Activated naive CD4-positive, alpha-beta T cell treated with anti-CD3 and anti-CD28 coated beads for 36 hours (primary cell): ENCODE measurements at regions of chr3 and their contacts with region 1.

Region 1: GRCh38 chr3:152193673-152194267 is 75.0 kb upstream of the MBNL1 start:
- DNase-seq: peak; percentile 57
- H3K4me3 Mint-ChIP-seq: peak overlapping the region; percentile 72
- H3K27ac Mint-ChIP-seq: peak overlapping the region; percentile 88
- H3K4me1 Mint-ChIP-seq: peaks cover 82% of the 10 kb centered on the region
- H3K27me3 Mint-ChIP-seq: no peaks in the 10 kb centered on the region

Region 2: DNA sequence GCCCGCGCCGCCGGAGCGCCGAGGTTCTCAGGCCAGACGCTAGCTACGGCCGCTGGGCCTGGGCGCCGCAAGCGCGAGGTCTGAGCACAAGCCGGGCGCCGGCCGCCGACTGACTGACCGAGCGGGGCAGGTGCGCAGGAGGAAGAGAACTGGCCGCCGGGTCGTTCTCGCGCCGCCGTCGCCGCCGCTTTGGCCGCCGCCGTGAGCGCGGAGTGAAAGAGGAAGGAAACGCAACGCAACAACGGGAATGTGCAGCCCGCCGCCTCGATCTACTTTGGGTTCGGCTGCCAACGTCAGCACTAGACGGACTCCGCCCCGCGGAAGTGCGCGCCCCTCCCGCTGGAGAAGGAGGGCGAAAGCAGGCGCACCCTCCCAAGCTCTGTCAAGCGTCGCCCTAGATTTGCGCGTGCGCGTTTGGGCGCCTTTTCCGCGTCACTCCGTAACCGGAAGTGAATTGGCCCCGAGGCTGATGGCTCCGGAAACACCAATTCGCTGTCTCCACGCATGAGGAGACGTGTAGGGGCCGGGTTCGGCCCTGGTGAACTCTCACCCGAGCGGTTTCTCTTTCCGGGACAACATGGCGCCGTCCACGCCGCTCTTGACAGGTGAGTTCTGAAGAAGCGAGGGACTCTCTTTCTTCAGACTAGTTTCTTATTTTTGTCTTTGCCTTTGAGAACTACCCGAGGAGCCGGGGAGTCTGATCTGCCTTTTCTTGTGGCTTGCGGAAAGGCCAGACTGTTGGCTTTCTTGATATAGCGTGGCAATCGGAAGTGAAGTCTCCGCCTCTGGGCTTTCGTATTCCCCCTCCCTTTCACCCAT is 1647.3 kb before region 1 on chr3 and contains the starts of genes EIF2A and SERP1:
- CTCF ChIA-PET with region 1: no interaction called
- intact Hi-C with region 1: loop called (anchors 10 kb)
- DNase-seq: peak; percentile 99
- H3K4me3 Mint-ChIP-seq: peak within 1 kb of the TSS; percentile 97
- H3K27ac Mint-ChIP-seq: peak within 1 kb of the TSS; percentile 95
- H3K4me1 Mint-ChIP-seq: peaks cover 69% of the 10 kb centered on the region
- H3K27me3 Mint-ChIP-seq: no peaks in the 10 kb centered on the region
- total RNA-seq, gene EIF2A: 133 to 135 TPM
- total RNA-seq, gene SERP1: 95.9 to 105 TPM

Region 3: GRCh38 chr3:152127058-152127457 is 66.7 kb before region 1 on chr3:
- CTCF ChIA-PET with region 1: no interaction called
- intact Hi-C with region 1: loop called (anchors 1 kb)
- DNase-seq: peak; percentile 53
- H3K4me3 Mint-ChIP-seq: no peak overlapping the region
- H3K27ac Mint-ChIP-seq: no peak overlapping the region
- H3K4me1 Mint-ChIP-seq: peaks cover 29% of the 10 kb centered on the region
- H3K27me3 Mint-ChIP-seq: no peaks in the 10 kb centered on the region

Region 4: DNA sequence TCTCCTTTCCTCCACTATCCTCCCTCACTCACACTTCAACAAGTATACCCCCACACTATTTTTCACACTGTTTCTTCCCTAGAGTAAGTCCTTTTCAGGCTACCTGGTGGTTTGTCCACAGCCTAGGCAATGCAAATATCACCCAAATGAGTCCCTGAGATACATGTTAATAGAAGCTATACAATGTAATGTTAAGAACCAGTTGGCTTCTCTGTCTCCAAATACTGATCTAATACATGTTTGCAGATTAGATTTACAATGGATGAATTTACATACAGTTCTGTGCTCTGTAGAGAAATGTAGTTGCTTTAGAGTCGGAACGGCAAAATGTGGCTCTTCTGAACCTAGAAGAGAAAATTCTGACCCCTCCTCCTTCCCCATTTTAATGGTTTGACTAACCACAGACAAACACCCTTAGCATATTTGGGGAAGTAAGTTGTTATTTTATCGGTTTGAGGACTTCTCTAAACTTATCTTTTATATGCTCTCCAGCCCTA is 11.4 kb after region 1 on chr3:
- CTCF ChIA-PET with region 1: interaction called, 6 read pairs
- intact Hi-C with region 1: loop called (anchors 1 kb)
- DNase-seq: no peak
- H3K4me3 Mint-ChIP-seq: peak overlapping the region; percentile 89
- H3K27ac Mint-ChIP-seq: peak overlapping the region; percentile 99
- H3K4me1 Mint-ChIP-seq: peaks cover 67% of the 10 kb centered on the region
- H3K27me3 Mint-ChIP-seq: no peaks in the 10 kb centered on the region

Region 5: GRCh38 chr3:152258448-152259393 is 65.0 kb after region 1 on chr3:
- CTCF ChIA-PET with region 1: interaction called, 5 read pairs
- intact Hi-C with region 1: loop called (anchors 1 kb)
- DNase-seq: peak; percentile 81
- H3K4me3 Mint-ChIP-seq: peak overlapping the region; percentile 72
- H3K27ac Mint-ChIP-seq: peak overlapping the region; percentile 94
- H3K4me1 Mint-ChIP-seq: peaks cover 84% of the 10 kb centered on the region
- H3K27me3 Mint-ChIP-seq: no peaks in the 10 kb centered on the region